ENCODE measurements at regions of chr2 and their contacts with region 1.

Region 1: GRCh38 chr2:65164426-65164891 is 34.6 kb upstream of the RAB1A start:
- DNase-seq: no peak
- ATAC-seq: no peak
- H3K4me3 Mint-ChIP-seq: no peak overlapping the region
- H3K27ac Mint-ChIP-seq: no peak overlapping the region
- H3K4me1 Mint-ChIP-seq: peaks cover 34% of the 10 kb centered on the region
- H3K27me3 Mint-ChIP-seq: no peaks in the 10 kb centered on the region
- CTCF ChIP-seq: no peak

Region 2: DNA sequence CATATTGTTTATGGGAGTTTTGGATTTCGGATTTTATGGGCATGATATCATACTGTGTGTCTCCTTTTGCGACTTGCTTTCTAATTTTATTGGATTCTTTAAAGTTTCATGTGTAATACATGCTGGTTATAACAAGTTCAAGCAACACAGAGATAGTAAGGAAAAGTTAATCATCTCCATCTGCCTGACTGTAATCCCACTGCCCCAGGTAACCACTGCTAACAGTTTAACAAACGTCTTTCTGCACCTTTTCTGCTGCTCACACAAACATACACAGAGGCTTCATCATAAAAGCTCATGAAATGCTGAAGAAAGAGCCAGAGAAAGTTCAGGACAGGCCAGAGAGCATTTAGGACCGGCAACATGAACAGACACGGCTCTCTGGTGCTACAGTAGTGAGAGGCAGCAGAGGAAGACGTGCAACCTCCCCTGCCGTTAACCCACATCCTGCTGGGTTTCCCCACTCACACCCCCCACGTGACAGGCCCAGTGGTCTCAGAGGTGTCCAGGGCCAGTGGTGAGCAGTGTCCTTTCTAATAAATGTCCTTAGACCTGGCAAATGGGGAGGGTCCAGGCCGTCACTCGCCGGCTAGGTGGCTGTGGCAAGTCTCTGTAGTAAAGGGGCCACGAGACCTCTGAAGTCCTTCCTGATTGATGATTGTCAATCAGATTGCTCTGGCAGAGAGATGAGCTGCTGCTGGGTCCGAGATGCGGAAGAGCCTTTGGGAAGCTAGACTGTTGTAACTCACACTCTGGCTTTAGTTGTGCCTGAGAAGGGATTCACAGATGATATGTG is 218.3 kb before region 1 on chr2:
- CTCF ChIA-PET with region 1: no interaction called
- POLR2A ChIA-PET with region 1: interaction called, 14 read pairs
- intact Hi-C with region 1: no loop called
- DNase-seq: peak; percentile 61
- ATAC-seq: peak; percentile 93
- H3K4me3 Mint-ChIP-seq: peak overlapping the region; percentile 78
- H3K27ac Mint-ChIP-seq: peak overlapping the region; percentile 93
- H3K4me1 Mint-ChIP-seq: peaks cover 69% of the 10 kb centered on the region
- H3K27me3 Mint-ChIP-seq: no peaks in the 10 kb centered on the region
- CTCF ChIP-seq: no peak

Region 3: GRCh38 chr2:65198737-65199136 is 34.3 kb after region 1 on chr2:
- CTCF ChIA-PET with region 1: no interaction called
- POLR2A ChIA-PET with region 1: no interaction called
- intact Hi-C with region 1: no loop called
- DNase-seq: no peak
- ATAC-seq: no peak
- H3K4me3 Mint-ChIP-seq: no peak overlapping the region
- H3K27ac Mint-ChIP-seq: no peak overlapping the region
- H3K4me1 Mint-ChIP-seq: no peaks in the 10 kb centered on the region
- H3K27me3 Mint-ChIP-seq: no peaks in the 10 kb centered on the region
- CTCF ChIP-seq: no peak

Measured in activated B cell treated with CpG ODN at 0.5 μM for 24 hours (primary cell).